ENCODE measurements at regions of chr10 and their contacts with region 1.

Region 1: GRCh38 chr10:23448802-23449570 is 10.1 kb downstream of the OTUD1 start:
- DNase-seq: peak in 3 of 14 experiments; percentile 50 to 61 (median 51)
- ATAC-seq: peak; percentile 76
- H3K4me3 ChIP-seq: no peak overlapping the region
- H3K4me3 Mint-ChIP-seq: no peak overlapping the region
- H3K27ac ChIP-seq: no peak overlapping the region
- H3K27ac Mint-ChIP-seq: peak overlapping the region; percentile 79
- H3K4me1 ChIP-seq: peaks cover 5% of the 10 kb centered on the region
- H3K4me1 Mint-ChIP-seq: peaks cover 31% of the 10 kb centered on the region
- H3K27me3 ChIP-seq: no peaks in the 10 kb centered on the region
- H3K27me3 Mint-ChIP-seq: no peaks in the 10 kb centered on the region
- CTCF ChIP-seq: no peak

Region 2: DNA sequence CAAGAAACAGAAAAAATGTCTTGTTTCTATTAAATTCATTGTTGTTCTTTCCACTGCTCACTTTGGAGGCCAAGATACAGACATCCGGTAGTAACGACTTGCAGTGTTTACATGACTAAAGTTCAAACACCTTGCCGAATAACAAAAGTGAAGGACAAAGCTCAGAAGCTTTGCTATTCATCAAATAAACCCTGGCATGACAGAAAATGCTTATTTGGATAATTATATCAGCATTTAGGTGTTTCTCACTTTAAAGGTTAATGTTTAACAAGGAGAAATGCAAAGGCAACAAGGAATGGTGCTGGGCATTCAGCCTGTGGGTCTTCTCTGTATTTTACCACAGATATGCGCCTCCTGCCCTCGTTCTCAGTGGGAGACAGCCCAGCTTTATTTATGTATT is 262.3 kb before region 1 on chr10:
- CTCF ChIA-PET with region 1: no interaction called
- POLR2A ChIA-PET with region 1: no interaction called
- intact Hi-C with region 1: no loop called
- DNase-seq: no peak
- ATAC-seq: no peak
- H3K4me3 ChIP-seq: no peak overlapping the region
- H3K4me3 Mint-ChIP-seq: no peak overlapping the region
- H3K27ac ChIP-seq: no peak overlapping the region
- H3K27ac Mint-ChIP-seq: no peak overlapping the region
- H3K4me1 ChIP-seq: no peaks in the 10 kb centered on the region
- H3K4me1 Mint-ChIP-seq: no peaks in the 10 kb centered on the region
- H3K27me3 ChIP-seq: peaks cover 33 to 47% of the 10 kb centered on the region in 2 experiments
- H3K27me3 Mint-ChIP-seq: peaks cover 73% of the 10 kb centered on the region
- CTCF ChIP-seq: no peak

Region 3: DNA sequence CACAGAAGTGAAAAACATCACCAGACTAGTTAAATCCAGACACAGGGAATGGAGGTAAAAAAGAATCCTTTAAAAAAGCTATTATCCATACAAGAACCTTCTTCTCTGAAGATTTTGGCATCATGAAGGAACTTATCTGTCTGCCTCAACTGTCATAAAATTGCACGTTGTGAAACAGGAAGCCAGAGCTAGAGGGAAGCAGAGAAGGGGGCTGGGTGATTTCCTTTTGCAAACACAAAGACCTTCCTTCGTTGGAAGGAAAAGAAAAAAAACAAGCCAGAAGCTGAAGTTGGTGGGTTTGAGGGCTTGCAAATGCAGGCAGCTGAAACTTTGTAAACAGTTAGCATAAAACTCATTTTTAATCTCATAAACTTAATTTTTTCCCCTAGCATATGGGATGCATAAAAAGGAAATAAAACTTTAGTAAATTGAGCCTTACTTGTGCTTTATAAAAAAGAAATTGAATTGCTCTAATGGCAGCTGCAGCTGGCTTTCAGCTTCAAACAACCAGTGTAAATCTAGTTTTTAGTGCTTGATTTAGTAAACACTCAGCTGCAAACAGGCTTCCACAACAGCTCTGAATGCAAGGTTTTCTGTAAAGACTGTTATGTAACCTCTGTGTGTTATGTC is 91.5 kb after region 1 on chr10:
- CTCF ChIA-PET with region 1: no interaction called
- POLR2A ChIA-PET with region 1: no interaction called
- intact Hi-C with region 1: loop called in 1 of 2 experiments (anchors 2 kb)
- DNase-seq: peak in 5 of 14 experiments; percentile 17 to 46 (median 31)
- ATAC-seq: peak; percentile 58
- H3K4me3 ChIP-seq: no peak overlapping the region
- H3K4me3 Mint-ChIP-seq: peak overlapping the region; percentile 27
- H3K27ac ChIP-seq: peak overlapping the region; percentile 24 to 50
- H3K27ac Mint-ChIP-seq: peak overlapping the region; percentile 92
- H3K4me1 ChIP-seq: peaks cover 16% of the 10 kb centered on the region
- H3K4me1 Mint-ChIP-seq: peaks cover 57% of the 10 kb centered on the region
- H3K27me3 ChIP-seq: no peaks in the 10 kb centered on the region
- H3K27me3 Mint-ChIP-seq: no peaks in the 10 kb centered on the region
- CTCF ChIP-seq: no peak

Region 4: DNA sequence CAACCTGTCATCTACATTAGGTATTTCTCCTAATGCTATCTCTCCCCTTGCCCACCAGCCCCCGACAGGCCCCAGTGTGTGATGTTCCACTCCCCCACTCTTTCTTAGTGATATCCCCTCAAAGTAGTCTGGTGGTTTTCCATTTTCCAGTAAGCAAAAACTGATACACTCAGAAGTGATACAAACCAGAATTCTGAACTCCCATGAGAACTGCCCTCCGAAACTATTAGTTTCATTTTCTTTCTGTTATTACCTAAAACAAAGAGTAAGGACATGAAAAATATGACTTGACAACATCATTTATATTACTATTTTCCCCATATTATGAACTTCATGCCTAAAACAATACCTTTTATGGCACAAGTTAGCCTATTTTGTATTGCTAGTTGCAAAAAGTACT is 164.9 kb after region 1 on chr10:
- CTCF ChIA-PET with region 1: no interaction called
- POLR2A ChIA-PET with region 1: no interaction called
- intact Hi-C with region 1: no loop called
- DNase-seq: no peak
- ATAC-seq: no peak
- H3K4me3 ChIP-seq: no peak overlapping the region
- H3K4me3 Mint-ChIP-seq: no peak overlapping the region
- H3K27ac ChIP-seq: no peak overlapping the region
- H3K27ac Mint-ChIP-seq: no peak overlapping the region
- H3K4me1 ChIP-seq: no peaks in the 10 kb centered on the region
- H3K4me1 Mint-ChIP-seq: no peaks in the 10 kb centered on the region
- H3K27me3 ChIP-seq: no peaks in the 10 kb centered on the region
- H3K27me3 Mint-ChIP-seq: no peaks in the 10 kb centered on the region
- CTCF ChIP-seq: no peak

Measured in CD4-positive, alpha-beta T cell (primary cell).